Naive thymus-derived CD8-positive, alpha-beta T cell (primary cell): ENCODE measurements at regions of chr3 and their contacts with region 1.

Region 1: GRCh38 chr3:71416876-71417275 is 166.7 kb downstream of the FOXP1 start:
- DNase-seq: peak in 9 of 10 donors; percentile 29 to 80 (median 69)
- ATAC-seq: peak; percentile 64 to 74
- H3K4me3 Mint-ChIP-seq: peak overlapping the region; percentile 53 to 88 (median 76)
- H3K27ac Mint-ChIP-seq: peak overlapping the region; percentile 91 to 99 (median 96)
- H3K4me1 Mint-ChIP-seq: peaks cover 44 to 95% (median 89%) of the 10 kb centered on the region in 4 donors
- H3K27me3 Mint-ChIP-seq: no peaks in the 10 kb centered on the region

Region 2: DNA sequence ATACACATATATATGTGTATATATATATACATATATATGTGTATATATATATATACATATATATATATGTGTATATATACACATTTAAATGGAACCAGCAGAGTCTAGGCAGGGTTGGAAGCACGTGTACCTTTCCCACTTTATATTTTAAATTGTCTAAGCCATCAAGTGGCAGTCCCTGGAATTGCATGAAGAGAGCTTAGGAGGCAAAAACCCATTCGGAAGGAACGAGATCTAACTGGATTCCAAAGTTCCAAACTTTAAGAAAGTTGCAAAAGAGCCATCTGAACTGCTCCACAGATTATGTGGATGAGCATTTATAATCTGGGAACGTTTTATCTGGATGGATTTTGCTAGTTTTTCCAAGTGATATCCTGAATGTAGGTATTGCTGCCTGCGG is 19.8 kb before region 1 on chr3:
- POLR2A ChIA-PET with region 1: interaction called, 16 read pairs
- DNase-seq: no peak
- ATAC-seq: no peak
- H3K4me3 Mint-ChIP-seq: peak overlapping the region in 7 of 10 donors; percentile 54 to 87 (median 77)
- H3K27ac Mint-ChIP-seq: peak overlapping the region; percentile 91 to 99 (median 97)
- H3K4me1 Mint-ChIP-seq: peaks cover 42 to 88% (median 77%) of the 10 kb centered on the region in 4 donors
- H3K27me3 Mint-ChIP-seq: no peaks in the 10 kb centered on the region

Region 3: GRCh38 chr3:71428841-71429596 is 12.1 kb after region 1 on chr3:
- POLR2A ChIA-PET with region 1: interaction called, 16 read pairs
- DNase-seq: peak in 2 of 10 donors; percentile 24 to 32
- ATAC-seq: peak; percentile 22 to 37
- H3K4me3 Mint-ChIP-seq: peak overlapping the region; percentile 52 to 79 (median 69)
- H3K27ac Mint-ChIP-seq: peak overlapping the region; percentile 90 to 99 (median 97)
- H3K4me1 Mint-ChIP-seq: peaks cover 59 to 99% (median 97%) of the 10 kb centered on the region in 4 donors
- H3K27me3 Mint-ChIP-seq: no peaks in the 10 kb centered on the region

Region 4: GRCh38 chr3:71478568-71478967 is 61.7 kb after region 1 on chr3:
- POLR2A ChIA-PET with region 1: interaction called, 10 read pairs
- DNase-seq: peak in 9 of 10 donors; percentile 22 to 91 (median 62)
- ATAC-seq: peak; percentile 87 to 89
- H3K4me3 Mint-ChIP-seq: peak overlapping the region; percentile 9 to 85 (median 66)
- H3K27ac Mint-ChIP-seq: peak overlapping the region; percentile 89 to 98 (median 96)
- H3K4me1 Mint-ChIP-seq: peaks cover 38 to 93% (median 87%) of the 10 kb centered on the region in 4 donors
- H3K27me3 Mint-ChIP-seq: no peaks in the 10 kb centered on the region